AG04450 (cell line): ENCODE measurements at regions of chr15 and their contacts with region 1.

Region 1: DNA sequence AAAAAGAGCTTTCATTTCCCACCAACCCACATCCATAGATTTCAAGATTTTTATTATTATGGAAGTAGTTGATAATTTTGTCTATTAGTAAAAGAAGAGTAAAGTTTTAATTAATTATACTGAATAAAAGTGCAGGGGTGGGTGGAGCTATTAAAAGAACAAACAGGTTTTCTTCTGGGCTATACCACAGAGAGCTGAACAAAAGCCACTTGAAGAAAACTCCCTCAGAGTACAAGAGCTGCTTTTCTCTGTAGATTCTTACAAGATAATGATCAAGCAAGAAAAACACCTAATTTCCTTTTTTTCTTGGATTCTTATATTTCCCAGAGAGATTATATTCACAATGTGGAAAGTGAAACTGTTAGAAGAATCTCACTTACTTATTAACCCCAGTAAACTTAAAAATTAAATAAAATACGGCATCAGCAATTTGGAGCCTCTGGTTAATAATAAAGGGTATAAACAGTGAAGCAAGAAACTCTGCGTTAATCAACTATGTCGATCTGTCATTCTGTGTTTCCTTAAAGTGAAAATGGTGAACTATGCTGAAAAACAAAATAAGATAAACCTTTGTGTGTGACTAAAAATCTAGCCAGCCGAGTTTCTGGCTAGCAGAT is 84.9 kb downstream of the THBS1 start:
- DNase-seq: no peak
- H3K4me3 ChIP-seq: no peak overlapping the region
- H3K27ac ChIP-seq: no peak overlapping the region
- H3K27me3 ChIP-seq: no peaks in the 10 kb centered on the region
- CTCF ChIP-seq: no peak

Region 2: GRCh38 chr15:39530466-39531342 is 135.0 kb before region 1 on chr15:
- CTCF ChIA-PET with region 1: no interaction called
- POLR2A ChIA-PET with region 1: no interaction called
- DNase-seq: no peak
- H3K4me3 ChIP-seq: no peak overlapping the region
- H3K27ac ChIP-seq: no peak overlapping the region
- H3K27me3 ChIP-seq: no peaks in the 10 kb centered on the region
- CTCF ChIP-seq: no peak

Region 3: DNA sequence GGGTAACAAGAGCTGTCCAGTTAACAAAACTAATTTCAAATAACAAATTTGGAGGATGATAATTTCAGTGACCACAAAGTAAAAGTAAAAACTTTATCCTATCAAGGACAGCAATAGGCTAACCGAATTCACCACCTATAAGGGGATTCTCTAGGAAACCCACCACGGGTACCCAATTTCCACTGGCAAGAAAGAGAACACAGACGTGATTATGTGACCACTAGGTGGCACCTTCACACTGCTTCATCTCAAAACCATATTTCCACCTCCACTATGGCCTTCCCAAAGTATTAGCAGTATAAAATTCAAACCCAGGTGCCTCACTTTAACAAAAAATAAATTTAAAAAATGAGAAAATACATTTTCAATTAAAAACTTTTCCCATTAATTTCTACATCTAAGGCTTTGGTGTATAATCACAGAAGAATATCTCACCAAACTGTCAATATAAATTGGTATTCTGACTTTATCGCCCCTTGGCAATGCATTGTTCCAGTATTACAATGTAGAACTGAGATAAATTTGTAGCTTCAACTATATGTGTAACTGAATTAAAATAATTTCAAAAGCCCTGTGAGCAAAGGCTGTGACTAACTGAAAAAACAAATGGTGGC is 20.4 kb after region 1 on chr15:
- CTCF ChIA-PET with region 1: interaction called, 10 read pairs
- POLR2A ChIA-PET with region 1: no interaction called
- DNase-seq: peak; percentile 37
- H3K4me3 ChIP-seq: no peak overlapping the region
- H3K27ac ChIP-seq: no peak overlapping the region
- H3K27me3 ChIP-seq: no peaks in the 10 kb centered on the region
- CTCF ChIP-seq: peak; percentile 80